ENCODE measurements at regions of chr10 and their contacts with region 1.

Region 1: GRCh38 chr10:87861953-87862678 is 1.2 kb downstream of the KLLN start:
- DNase-seq: peak; percentile 96
- H3K4me3 ChIP-seq: peak overlapping the region; percentile 91
- CTCF ChIP-seq: no peak

Region 2: GRCh38 chr10:87817609-87818504 is 44.3 kb before region 1 on chr10 and contains the start of gene ATAD1:
- in situ Hi-C with region 1: no loop called
- DNase-seq: peak; percentile 32
- H3K4me3 ChIP-seq: peak within 1 kb of the TSS; percentile 78
- CTCF ChIP-seq: peak; percentile 45

Region 3: DNA sequence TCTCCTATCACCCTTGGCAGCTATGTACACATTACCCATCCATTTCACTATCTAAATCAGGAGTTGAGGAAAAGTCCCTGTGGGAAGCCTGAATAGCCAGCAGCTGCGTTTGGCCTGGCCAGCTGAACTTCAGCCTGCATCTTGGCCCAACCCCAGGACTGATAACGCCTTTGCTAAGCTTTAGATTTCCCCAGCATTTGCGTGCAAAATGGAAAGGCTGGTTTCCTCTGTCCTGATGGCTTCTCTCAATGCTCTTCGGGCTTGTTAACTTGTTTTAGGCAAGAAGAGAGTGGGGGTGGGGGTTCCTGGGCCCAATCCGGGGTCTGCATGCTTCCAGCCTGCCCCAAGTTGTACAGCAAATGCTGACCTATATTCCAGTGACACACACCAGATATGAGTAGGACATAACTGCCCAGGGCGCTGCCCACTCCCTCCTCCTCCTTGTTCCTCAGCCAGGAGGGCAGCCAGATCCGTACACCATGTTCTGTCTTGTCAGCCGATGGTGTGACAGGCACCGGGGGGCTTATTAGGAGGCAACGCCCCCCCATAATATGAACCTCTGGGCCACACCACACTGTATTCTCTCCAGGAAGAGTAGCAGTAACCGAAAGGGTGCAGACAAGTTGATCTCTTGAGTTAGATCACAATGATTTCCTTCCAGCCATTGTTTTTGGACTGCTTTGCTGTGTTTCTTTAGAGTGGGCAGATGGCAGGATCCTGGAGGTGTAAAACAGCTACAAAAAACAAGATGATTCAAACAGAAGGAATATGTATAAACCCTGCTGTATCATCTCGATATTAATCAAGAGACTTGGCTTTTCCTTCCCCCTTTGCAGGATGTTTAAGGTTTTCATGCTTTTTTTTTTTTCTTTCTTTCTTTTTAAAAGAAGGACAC is 382.0 kb after region 1 on chr10:
- in situ Hi-C with region 1: loop called (anchors 25 kb)
- DNase-seq: no peak
- H3K4me3 ChIP-seq: no peak overlapping the region
- CTCF ChIP-seq: no peak

Region 4: DNA sequence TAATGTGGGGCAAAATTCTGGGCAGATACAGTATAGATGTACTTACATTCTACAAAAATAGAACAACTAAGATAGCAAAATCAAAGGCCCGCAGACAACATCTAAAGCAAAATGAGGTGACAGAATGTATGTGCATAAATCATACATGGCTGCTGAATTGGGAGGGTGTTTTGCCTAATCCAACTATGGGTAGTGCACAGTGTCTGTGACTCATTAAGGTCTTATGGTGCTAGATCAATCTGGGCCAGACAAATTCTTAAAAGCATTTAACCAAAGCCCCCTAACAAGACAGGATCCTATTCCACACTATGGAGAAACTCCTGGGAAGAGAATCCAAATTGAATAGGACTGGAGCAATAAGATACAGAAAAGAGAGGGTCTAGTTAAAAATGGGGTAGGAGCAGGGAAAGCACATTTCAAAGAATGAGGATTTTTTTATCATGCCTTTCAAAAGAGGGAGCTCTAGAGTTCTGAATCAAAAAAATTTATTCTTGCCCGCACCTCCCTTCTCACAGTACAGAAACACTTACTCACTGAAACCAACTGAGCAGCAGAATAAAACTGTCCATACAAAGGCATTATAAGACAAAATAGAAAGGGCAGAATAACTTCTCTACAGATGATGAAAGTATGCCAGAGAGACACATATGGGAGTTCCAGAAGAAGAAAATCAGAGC is 539.7 kb after region 1 on chr10:
- in situ Hi-C with region 1: loop called (anchors 25 kb)
- DNase-seq: no peak
- H3K4me3 ChIP-seq: no peak overlapping the region
- CTCF ChIP-seq: peak; percentile 18

Measured in astrocyte of the cerebellum (primary cell).